Naive thymus-derived CD4-positive, alpha-beta T cell (primary cell): ENCODE measurements at regions of chr12 and their contacts with region 1.

Region 1: DNA sequence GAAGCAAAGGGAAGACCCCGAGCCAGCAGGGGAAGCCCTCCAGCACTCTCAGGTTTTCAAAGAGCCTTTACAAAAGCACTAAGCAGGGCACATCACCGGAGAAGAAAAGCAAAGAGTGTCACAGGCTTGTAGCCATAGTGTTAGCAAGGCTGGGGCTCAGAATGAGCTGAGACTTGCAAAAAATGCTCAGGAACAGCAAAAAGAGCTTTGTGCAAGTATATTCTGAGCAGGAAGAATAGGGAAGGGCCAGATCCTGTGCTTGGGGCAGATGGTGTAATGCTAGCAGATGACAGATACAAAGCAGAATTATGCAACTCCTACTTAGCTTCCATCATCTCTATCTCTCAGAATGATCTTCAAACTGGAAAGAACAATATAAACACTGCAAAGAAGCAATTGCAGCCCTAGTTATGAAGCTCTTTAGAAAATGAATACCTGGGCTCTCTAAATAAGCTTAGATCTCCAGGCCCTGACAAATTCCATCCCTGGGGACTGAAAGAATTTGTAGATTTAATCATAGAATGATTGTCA is 23.7 kb upstream of the PARP11 start:
- DNase-seq: no peak
- ATAC-seq: peak; percentile 66
- H3K4me3 ChIP-seq: peak overlapping the region; percentile 38
- H3K4me3 Mint-ChIP-seq: peak overlapping the region; percentile 68 to 89 (median 78)
- H3K27ac ChIP-seq: peak overlapping the region; percentile 71
- H3K27ac Mint-ChIP-seq: peak overlapping the region in 8 of 9 donors; percentile 94 to 98 (median 97)
- H3K4me1 ChIP-seq: peaks cover 44 to 84% of the 10 kb centered on the region in 2 donors
- H3K4me1 Mint-ChIP-seq: peaks cover 2 to 58% (median 45%) of the 10 kb centered on the region in 7 donors
- H3K27me3 ChIP-seq: no peaks in the 10 kb centered on the region
- H3K27me3 Mint-ChIP-seq: no peaks in the 10 kb centered on the region

Region 2: DNA sequence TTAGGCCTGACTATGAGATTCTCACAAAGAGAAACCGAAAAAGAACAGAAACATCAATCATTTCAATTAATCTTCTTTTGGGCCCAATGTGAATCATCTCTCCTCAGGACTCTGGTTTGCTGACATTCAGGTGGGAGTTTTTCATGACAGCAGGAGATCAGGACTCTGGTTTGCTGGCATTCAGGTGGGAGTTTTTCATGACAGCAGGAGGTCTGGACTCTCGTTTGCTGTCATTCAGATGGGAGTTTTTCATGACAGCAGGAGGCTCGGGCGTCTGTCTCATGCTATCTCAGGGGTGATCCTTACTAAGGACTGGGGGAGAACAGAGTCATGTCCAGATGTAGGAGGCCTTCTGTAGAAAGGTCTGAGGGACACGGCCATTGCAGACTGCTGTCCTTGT is 16.4 kb after region 1 on chr12:
- CTCF ChIA-PET with region 1: interaction called, 5 read pairs
- POLR2A ChIA-PET with region 1: interaction called, 18 read pairs
- intact Hi-C with region 1: no loop called
- DNase-seq: no peak
- ATAC-seq: no peak
- H3K4me3 ChIP-seq: no peak overlapping the region
- H3K4me3 Mint-ChIP-seq: no peak overlapping the region
- H3K27ac ChIP-seq: peak overlapping the region; percentile 14
- H3K27ac Mint-ChIP-seq: peak overlapping the region in 8 of 9 donors; percentile 58 to 91 (median 84)
- H3K4me1 ChIP-seq: peaks cover 0 to 3% of the 10 kb centered on the region in 2 donors
- H3K4me1 Mint-ChIP-seq: peaks cover under 1 to 47% (median 20%) of the 10 kb centered on the region in 7 donors
- H3K27me3 ChIP-seq: no peaks in the 10 kb centered on the region
- H3K27me3 Mint-ChIP-seq: peaks cover 0 to 7% (median 0%) of the 10 kb centered on the region in 5 donors

Region 3: GRCh38 chr12:3931746-3932145 is 34.9 kb after region 1 on chr12:
- CTCF ChIA-PET with region 1: interaction called, 6 read pairs
- POLR2A ChIA-PET with region 1: interaction called, 9 read pairs
- intact Hi-C with region 1: loop called (anchors 1 to 5 kb)
- DNase-seq: no peak
- ATAC-seq: no peak
- H3K4me3 ChIP-seq: no peak overlapping the region
- H3K4me3 Mint-ChIP-seq: peak overlapping the region in 3 of 10 donors; percentile 7 to 81 (median 27)
- H3K27ac ChIP-seq: no peak overlapping the region
- H3K27ac Mint-ChIP-seq: peak overlapping the region in 6 of 9 donors; percentile 51 to 89 (median 74)
- H3K4me1 ChIP-seq: peaks cover 0 to 46% of the 10 kb centered on the region in 2 donors
- H3K4me1 Mint-ChIP-seq: peaks cover 29 to 82% (median 73%) of the 10 kb centered on the region in 7 donors
- H3K27me3 ChIP-seq: no peaks in the 10 kb centered on the region
- H3K27me3 Mint-ChIP-seq: peaks cover 0 to 16% (median 0%) of the 10 kb centered on the region in 5 donors